Naive thymus-derived CD4-positive, alpha-beta T cell (primary cell): ENCODE measurements at regions of chr2 and their contacts with region 1.

Region 1: DNA sequence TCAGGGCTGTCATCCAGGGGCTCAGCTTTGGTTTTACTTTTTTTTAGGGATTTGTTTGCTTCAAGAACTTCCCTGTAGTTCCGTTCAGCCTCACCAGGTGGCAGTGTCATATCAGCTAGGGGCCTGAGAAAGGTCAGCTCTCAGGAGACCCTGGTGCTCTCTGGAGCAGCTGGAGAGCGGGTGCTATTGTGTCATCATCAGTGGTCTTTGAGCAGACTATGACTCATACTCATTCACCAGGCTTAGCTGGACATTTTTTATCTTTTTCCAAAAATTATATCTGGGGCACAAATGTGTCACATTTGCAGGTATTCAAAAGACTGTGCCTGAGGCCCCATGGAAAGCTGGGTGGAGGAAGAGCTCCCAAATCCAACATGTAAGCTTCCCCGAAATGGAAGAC is 24.4 kb downstream of the ZNF892 start:
- DNase-seq: peak in 1 of 9 donors; percentile 25
- ATAC-seq: no peak
- H3K4me3 ChIP-seq: no peak overlapping the region
- H3K4me3 Mint-ChIP-seq: no peak overlapping the region
- H3K27ac ChIP-seq: no peak overlapping the region
- H3K27ac Mint-ChIP-seq: no peak overlapping the region
- H3K4me1 ChIP-seq: no peaks in the 10 kb centered on the region
- H3K4me1 Mint-ChIP-seq: no peaks in the 10 kb centered on the region
- H3K27me3 ChIP-seq: no peaks in the 10 kb centered on the region
- H3K27me3 Mint-ChIP-seq: peaks cover 0 to 8% (median 0%) of the 10 kb centered on the region in 5 donors

Region 2: GRCh38 chr2:95333888-95334338 is 102.2 kb after region 1 on chr2:
- CTCF ChIA-PET with region 1: no interaction called
- POLR2A ChIA-PET with region 1: no interaction called
- intact Hi-C with region 1: loop called in 1 of 2 experiments (anchors 10 kb)
- DNase-seq: no peak
- ATAC-seq: no peak
- H3K4me3 ChIP-seq: no peak overlapping the region
- H3K4me3 Mint-ChIP-seq: no peak overlapping the region
- H3K27ac ChIP-seq: no peak overlapping the region
- H3K27ac Mint-ChIP-seq: no peak overlapping the region
- H3K4me1 ChIP-seq: no peaks in the 10 kb centered on the region
- H3K4me1 Mint-ChIP-seq: no peaks in the 10 kb centered on the region
- H3K27me3 ChIP-seq: no peaks in the 10 kb centered on the region
- H3K27me3 Mint-ChIP-seq: peaks cover 0 to 7% (median 4%) of the 10 kb centered on the region in 5 donors